Right lobe of liver (tissue), 6 donors: ENCODE measurements at regions of chr5 and their contacts with region 1.

Region 1: GRCh38 chr5:56909294-56910209 is at the start of gene SETD9:
- DNase-seq: peak; percentile 99
- ATAC-seq: peak; percentile 90 to 95 (median 90)
- H3K4me3 ChIP-seq: peak within 1 kb of the TSS; percentile 60 to 72 (median 65)
- H3K27ac ChIP-seq: peak within 1 kb of the TSS; percentile 92 to 99 (median 96)
- H3K4me1 ChIP-seq: peaks cover 0 to 11% (median 0%) of the 10 kb centered on the region in 4 donors
- H3K27me3 ChIP-seq: no peaks in the 10 kb centered on the region
- CTCF ChIP-seq: no peak
- POLR2A ChIP-seq: peak; percentile 77
- total RNA-seq, gene SETD9: 4.9 to 18.8 (median 9.9) TPM

Region 2: GRCh38 chr5:56951946-56952691 is 42.6 kb after region 1 on chr5 and contains the start of gene MIER3:
- intact Hi-C with region 1: loop called in 1 of 2 experiments (anchors 10 kb)
- DNase-seq: peak; percentile 84 to 87 (median 85)
- ATAC-seq: peak; percentile 91 to 96 (median 92)
- H3K4me3 ChIP-seq: peak within 1 kb of the TSS; percentile 70 to 79 (median 74)
- H3K27ac ChIP-seq: peak within 1 kb of the TSS; percentile 32 to 77 (median 66)
- H3K4me1 ChIP-seq: peaks cover 0 to 6% (median 2%) of the 10 kb centered on the region in 4 donors
- H3K27me3 ChIP-seq: no peaks in the 10 kb centered on the region
- CTCF ChIP-seq: no peak
- POLR2A ChIP-seq: peak; percentile 48
- total RNA-seq, gene MIER3: 7.3 to 14.7 (median 11.2) TPM

Region 3: GRCh38 chr5:56973473-56973872 is 63.9 kb after region 1 on chr5:
- intact Hi-C with region 1: no loop called
- DNase-seq: no peak
- ATAC-seq: no peak
- H3K4me3 ChIP-seq: no peak overlapping the region
- H3K27ac ChIP-seq: no peak overlapping the region
- H3K4me1 ChIP-seq: no peaks in the 10 kb centered on the region
- H3K27me3 ChIP-seq: no peaks in the 10 kb centered on the region
- CTCF ChIP-seq: no peak
- POLR2A ChIP-seq: no peak

Region 4: GRCh38 chr5:57137401-57137800 is 227.8 kb after region 1 on chr5:
- intact Hi-C with region 1: loop called in 1 of 2 experiments (anchors 10 kb)
- DNase-seq: no peak
- ATAC-seq: no peak
- H3K4me3 ChIP-seq: no peak overlapping the region
- H3K27ac ChIP-seq: no peak overlapping the region
- H3K4me1 ChIP-seq: peaks cover 0 to 6% (median 0%) of the 10 kb centered on the region in 4 donors
- H3K27me3 ChIP-seq: no peaks in the 10 kb centered on the region
- CTCF ChIP-seq: no peak
- POLR2A ChIP-seq: no peak